PC-9 (cell line): ENCODE measurements at regions of chr5 and their contacts with region 1.

Region 1: DNA sequence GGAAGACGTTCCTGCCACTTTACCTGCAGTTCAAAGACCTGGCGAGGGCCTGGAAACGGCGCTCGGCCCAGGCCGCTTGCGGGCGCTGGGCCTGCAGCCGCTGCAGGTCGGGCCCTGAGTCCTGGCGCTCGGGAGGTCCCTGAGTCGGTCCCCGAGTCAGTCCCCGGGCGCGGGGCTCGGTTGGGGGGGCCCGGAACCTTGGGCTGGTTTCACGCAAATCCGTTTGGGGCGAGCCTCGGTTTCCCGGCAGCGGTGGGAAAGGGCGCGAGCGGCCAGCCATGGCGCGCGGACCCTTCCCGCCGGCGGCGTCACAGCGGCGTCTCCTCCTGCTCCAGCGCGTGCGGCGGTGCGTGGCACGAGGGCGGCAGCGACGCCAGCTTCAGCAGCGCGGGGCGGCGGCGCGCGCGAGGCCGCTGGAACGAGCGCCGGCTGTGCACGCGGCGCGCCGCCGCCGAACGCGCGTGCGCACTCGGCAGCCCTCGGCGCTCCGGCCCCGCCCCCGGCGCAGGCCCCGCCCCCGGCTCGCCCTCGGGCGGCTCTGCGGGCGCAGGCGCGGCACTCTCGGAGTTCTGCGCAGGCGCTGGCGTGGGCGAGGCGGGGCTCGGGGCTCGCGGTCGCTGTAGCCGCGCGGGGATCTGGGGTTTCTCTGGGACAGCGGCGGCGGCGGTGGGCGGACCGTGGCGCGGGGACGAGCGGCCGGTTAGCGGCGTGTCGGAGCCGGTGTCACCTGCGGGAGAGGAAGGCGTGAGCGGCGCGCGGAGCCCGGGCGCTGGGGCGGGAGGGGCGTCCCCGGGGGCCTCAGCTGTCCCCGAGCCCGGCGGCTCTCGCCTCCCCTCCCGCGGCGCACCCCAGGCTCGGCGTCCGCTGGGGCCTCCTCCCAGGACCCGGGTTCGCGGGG is 29.9 kb downstream of the EXOC3 start:
- DNase-seq: peak; percentile 65 to 99
- H3K4me3 ChIP-seq: peak overlapping the region; percentile 67
- H3K27ac ChIP-seq: peak overlapping the region; percentile 59
- H3K4me1 ChIP-seq: peaks cover 19% of the 10 kb centered on the region
- H3K27me3 ChIP-seq: no peaks in the 10 kb centered on the region
- CTCF ChIP-seq: no peak

Region 2: GRCh38 chr5:442335-443238 is 30.3 kb before region 1 on chr5 and contains the start of gene EXOC3:
- CTCF ChIA-PET with region 1: interaction called, 12 read pairs
- POLR2A ChIA-PET with region 1: interaction called, 3 read pairs
- intact Hi-C with region 1: no loop called
- DNase-seq: peak; percentile 71 to 92
- H3K4me3 ChIP-seq: peak within 1 kb of the TSS; percentile 99
- H3K27ac ChIP-seq: peak within 1 kb of the TSS; percentile 25
- H3K4me1 ChIP-seq: peaks cover 24% of the 10 kb centered on the region
- H3K27me3 ChIP-seq: no peaks in the 10 kb centered on the region
- CTCF ChIP-seq: no peak
- total RNA-seq, gene EXOC3: 155 and 188 TPM in 2 replicates